ENCODE measurements at regions of chr1 and their contacts with region 1.

Region 1: GRCh38 chr1:42173155-42173933 is 8.8 kb upstream of the GUCA2A start:
- DNase-seq: no peak
- H3K4me3 ChIP-seq: no peak overlapping the region
- H3K27ac ChIP-seq: no peak overlapping the region
- H3K27me3 ChIP-seq: no peaks in the 10 kb centered on the region
- CTCF ChIP-seq: peak; percentile 98

Region 2: DNA sequence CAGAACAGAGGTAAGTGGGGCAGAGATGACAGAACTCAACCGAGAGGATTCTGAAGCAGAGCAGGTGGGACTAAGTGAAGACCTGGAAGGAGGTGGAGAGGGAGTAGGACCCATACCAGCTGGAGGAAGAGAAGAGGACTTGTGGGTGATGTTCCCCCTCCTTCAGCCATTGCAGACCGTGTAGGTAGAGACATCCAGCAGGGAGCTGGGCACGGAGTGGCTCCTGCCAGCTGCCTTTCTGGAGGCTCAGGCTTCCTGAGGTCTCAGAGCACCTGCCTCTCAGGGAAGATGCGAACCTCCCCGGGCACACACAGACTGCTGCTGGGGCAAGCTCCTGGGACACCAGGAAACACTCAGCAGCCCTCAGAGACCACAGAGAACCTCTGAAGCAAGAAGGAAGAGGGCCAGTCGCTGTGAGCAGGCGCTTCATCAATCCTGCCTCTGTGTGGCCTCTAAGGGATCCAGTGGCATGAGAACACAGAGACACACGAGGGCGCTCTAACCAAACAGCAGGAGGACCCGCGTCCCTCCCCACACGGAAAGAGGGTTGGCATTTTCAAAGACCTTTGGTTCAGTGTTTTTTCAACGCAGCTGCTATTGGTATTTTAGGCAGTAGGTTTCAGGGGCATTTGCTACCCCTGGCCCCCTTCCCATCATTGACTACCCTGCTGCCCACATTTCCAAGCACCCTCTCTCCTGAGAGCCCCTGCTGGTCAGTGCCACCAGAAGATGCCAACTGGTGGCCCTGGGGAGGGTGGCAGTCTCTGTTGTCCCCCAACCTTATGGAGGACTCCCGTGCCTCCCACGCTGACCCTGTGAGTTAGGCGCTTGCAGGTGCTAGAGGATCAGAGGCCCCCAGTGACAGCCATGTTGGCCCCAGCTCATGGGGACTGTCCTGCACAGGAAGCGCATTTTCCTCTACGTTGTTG is 599.3 kb before region 1 on chr1:
- CTCF ChIA-PET with region 1: interaction called, 13 read pairs
- POLR2A ChIA-PET with region 1: no interaction called
- DNase-seq: peak; percentile 63
- H3K4me3 ChIP-seq: no peak overlapping the region
- H3K27ac ChIP-seq: no peak overlapping the region
- H3K27me3 ChIP-seq: no peaks in the 10 kb centered on the region
- CTCF ChIP-seq: peak; percentile 96

Region 3: DNA sequence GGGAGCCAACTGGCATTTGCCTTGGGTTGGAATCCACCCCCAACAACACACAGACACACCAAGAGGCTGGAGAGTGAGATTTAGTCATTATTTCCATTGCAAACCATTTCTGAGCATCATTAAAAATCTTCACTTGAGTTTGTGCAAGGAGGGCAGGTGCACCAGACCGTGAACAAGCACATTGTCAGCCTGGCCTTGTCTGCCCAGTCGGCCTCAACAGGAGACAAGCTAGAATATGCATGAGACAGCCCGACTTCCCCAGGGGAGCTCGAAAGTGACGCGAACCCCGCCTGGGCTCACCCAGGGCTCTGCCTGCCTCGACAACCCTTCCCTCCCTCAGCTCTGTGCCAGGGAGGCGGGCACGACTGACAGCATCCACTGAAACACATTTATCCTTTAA is 35.6 kb before region 1 on chr1:
- CTCF ChIA-PET with region 1: no interaction called
- POLR2A ChIA-PET with region 1: no interaction called
- DNase-seq: no peak
- H3K4me3 ChIP-seq: no peak overlapping the region
- H3K27ac ChIP-seq: no peak overlapping the region
- H3K27me3 ChIP-seq: peaks cover 26% of the 10 kb centered on the region
- CTCF ChIP-seq: no peak

Region 4: DNA sequence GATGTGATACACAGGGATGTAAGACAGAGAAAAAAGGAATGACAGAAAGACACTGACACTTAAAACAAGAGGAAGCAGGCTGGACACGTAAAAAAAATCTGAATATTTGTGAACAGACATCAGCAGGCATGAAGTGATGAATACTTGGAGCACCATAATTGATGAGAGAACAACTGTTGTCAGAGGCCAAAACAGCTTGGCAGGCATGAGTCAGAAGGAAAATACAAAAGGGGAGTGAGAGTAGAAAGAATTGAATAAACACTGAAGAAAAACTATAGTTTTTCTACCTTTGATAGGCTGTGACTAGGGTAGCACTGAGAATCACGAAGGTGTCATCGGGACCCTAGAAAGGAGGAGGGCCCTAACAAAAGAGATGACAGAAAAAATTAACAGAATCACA is 12.8 kb after region 1 on chr1:
- CTCF ChIA-PET with region 1: interaction called, 30 read pairs
- POLR2A ChIA-PET with region 1: interaction called, 3 read pairs
- DNase-seq: no peak
- H3K4me3 ChIP-seq: no peak overlapping the region
- H3K27ac ChIP-seq: no peak overlapping the region
- H3K27me3 ChIP-seq: no peaks in the 10 kb centered on the region
- CTCF ChIP-seq: no peak

Region 5: GRCh38 chr1:42319128-42319851 is 145.9 kb after region 1 on chr1:
- CTCF ChIA-PET with region 1: interaction called, 11 read pairs
- POLR2A ChIA-PET with region 1: no interaction called
- DNase-seq: no peak
- H3K4me3 ChIP-seq: no peak overlapping the region
- H3K27ac ChIP-seq: no peak overlapping the region
- H3K27me3 ChIP-seq: no peaks in the 10 kb centered on the region
- CTCF ChIP-seq: no peak